ENCODE measurements at regions of chr4 and their contacts with region 1.

Region 1: DNA sequence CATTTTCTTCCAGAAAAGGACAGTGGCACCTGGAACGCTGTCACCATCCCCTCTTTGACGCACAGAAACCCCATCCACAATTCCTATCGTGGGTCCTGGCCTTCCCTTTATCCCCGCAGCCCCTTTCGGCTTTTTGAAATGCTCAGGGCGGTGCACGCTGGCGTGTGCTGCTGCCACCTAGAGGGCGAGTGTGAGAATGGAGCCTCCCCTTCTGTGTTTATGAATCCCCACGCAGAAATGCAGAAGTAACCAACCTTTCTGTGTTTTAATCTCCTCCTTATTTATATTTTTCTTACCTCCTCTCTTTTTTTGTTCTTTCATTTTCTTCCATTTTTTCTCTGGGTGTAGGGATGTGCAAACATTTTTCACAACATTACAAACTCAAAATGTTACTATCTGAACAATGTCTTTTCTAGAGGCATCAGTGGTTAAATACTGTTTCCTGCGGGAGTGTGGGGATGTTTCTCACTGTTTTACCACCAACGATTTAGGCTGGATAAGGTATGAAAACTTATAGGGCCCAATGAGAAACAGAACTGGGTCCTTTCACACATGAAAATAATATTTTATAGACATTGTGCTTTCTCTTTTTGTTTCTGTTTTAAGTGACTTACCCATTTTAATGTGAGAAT is 50.0 kb downstream of the TMA16 start:
- DNase-seq: no peak

Region 2: DNA sequence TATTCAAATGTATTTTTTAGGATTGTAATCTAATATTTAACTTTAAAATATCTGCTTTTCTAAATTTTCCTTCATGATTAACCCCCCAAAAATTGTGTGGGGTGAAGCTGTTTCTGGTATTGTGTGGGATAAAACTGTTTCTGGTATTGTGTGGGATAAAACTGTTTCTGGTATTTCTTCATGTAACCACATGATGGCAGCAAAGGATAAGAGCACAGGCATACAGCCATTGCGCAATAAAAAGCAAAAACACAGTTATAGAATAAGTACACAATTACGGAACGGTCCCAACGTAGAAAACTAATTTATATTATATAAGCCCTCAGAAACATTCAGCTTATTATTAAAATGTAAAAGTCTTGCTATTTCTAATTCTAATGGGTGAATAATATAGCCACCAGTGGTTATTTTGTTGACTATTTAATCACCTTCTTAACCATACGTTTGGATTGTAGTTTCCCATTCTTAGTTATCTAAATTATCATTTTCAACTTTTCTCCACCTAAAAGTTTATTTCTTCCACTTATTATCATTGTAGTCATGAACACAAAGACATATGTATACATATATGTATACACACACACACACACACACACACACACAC is 1046.9 kb before region 1 on chr4:
- intact Hi-C with region 1: loop called (anchors 10 kb)
- DNase-seq: no peak

Region 3: GRCh38 chr4:163484906-163485305 is 59.6 kb before region 1 on chr4:
- intact Hi-C with region 1: loop called (anchors 2 kb)
- DNase-seq: no peak

Region 4: DNA sequence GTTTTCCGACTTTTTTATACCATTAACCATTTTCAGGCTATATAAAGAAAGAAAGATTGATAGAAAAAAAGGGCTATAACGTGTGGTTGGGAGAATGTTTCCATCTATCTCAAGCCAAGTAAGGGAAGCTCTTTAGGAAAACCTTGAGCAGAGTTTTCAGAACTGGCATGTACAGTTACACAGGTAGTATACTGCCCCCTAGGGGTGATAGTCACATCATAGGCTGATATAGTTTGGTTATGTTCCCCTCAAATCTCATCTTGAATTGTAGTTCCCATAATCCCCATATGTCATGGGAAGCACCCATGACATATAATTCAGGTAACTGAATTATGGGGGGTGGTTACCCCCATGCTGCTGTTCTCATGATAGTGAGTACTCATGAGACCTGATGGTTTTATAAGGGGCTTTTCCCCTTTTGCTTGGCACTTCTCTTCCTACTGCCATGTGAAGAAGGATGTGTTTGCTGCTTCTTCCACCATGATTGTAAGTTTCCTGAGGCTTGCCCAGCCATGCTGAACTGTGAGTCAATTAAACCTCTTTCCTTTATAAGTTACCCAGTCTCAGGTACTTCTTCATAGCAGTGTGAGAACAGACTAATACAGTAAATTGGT is 136.8 kb after region 1 on chr4:
- intact Hi-C with region 1: no loop called
- DNase-seq: no peak

Measured in cardiac septum (tissue), 1 donor.